Natural killer cell (primary cell): ENCODE measurements at regions of chr9 and their contacts with region 1.

Region 1: DNA sequence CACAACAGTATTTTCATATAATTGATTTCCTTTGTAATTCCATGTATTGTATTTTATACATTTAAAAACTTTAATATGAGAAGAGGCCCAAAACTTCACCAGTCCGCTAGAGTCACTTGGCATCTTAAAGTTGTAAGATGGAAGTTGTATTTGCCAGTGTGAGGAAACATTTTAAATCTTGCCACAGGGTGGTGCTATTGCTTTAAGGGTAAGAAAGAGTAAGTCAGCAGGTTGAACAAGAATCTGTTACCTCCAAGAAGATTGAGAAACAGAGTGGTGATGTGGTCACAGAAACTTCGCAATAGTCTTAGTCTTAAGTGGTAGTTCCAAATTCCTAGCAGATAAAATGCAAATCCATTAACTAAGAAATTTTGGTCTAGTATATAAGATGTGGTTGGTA is 39.8 kb upstream of the RANBP6 start:
- DNase-seq: peak in 1 of 2 donors; percentile 81
- ATAC-seq: peak; percentile 85 to 89 (median 87)
- H3K4me3 ChIP-seq: no peak overlapping the region
- H3K4me3 Mint-ChIP-seq: no peak overlapping the region
- H3K27ac ChIP-seq: no peak overlapping the region
- H3K27ac Mint-ChIP-seq: peak overlapping the region in 1 of 2 donors; percentile 3
- H3K4me1 ChIP-seq: no peaks in the 10 kb centered on the region
- H3K4me1 Mint-ChIP-seq: peaks cover 7% of the 10 kb centered on the region in 2 donors
- H3K27me3 ChIP-seq: no peaks in the 10 kb centered on the region
- H3K27me3 Mint-ChIP-seq: peaks cover 9 to 14% of the 10 kb centered on the region in 2 donors
- CTCF ChIP-seq: peak; percentile 41

Region 2: GRCh38 chr9:5886114-5886939 is 168.9 kb before region 1 on chr9:
- intact Hi-C with region 1: loop called (anchors 1 kb)
- DNase-seq: peak; percentile 79 to 87
- ATAC-seq: peak; percentile 92 to 99 (median 99)
- H3K4me3 ChIP-seq: no peak overlapping the region
- H3K4me3 Mint-ChIP-seq: no peak overlapping the region
- H3K27ac ChIP-seq: no peak overlapping the region
- H3K27ac Mint-ChIP-seq: peak overlapping the region in 1 of 2 donors; percentile 65
- H3K4me1 ChIP-seq: peaks cover 12% of the 10 kb centered on the region
- H3K4me1 Mint-ChIP-seq: peaks cover 10 to 18% of the 10 kb centered on the region in 2 donors
- H3K27me3 ChIP-seq: no peaks in the 10 kb centered on the region
- H3K27me3 Mint-ChIP-seq: peaks cover 0 to 2% of the 10 kb centered on the region in 2 donors
- CTCF ChIP-seq: peak; percentile 90

Region 3: DNA sequence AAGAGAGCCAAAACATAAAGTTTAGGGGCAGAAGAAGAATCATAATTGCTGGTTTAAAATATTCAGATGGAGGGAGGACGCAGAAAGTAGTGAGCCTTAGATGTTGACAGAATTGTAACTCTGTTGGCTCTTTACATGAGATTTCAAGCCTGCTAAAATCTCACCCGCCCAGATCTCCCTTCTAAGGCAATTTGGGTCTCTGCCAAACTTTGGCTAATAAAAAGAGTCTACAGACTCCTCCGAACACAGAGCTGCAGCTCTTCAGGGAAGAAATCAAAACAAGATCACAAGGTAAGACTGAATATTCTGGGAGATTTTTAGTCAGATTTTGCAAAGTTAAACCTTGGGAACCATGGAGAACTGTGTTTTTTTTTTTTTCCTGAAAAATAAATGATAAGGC is 160.3 kb after region 1 on chr9 and contains the start of gene IL33:
- intact Hi-C with region 1: loop called (anchors 10 kb)
- DNase-seq: no peak
- ATAC-seq: no peak
- H3K4me3 ChIP-seq: no peak within 1 kb of the TSS
- H3K4me3 Mint-ChIP-seq: no peak within 1 kb of the TSS
- H3K27ac ChIP-seq: no peak within 1 kb of the TSS
- H3K27ac Mint-ChIP-seq: no peak within 1 kb of the TSS
- H3K4me1 ChIP-seq: no peaks in the 10 kb centered on the region
- H3K4me1 Mint-ChIP-seq: no peaks in the 10 kb centered on the region
- H3K27me3 ChIP-seq: peaks cover 4% of the 10 kb centered on the region
- H3K27me3 Mint-ChIP-seq: peaks cover 21 to 62% of the 10 kb centered on the region in 2 donors
- CTCF ChIP-seq: no peak
- total RNA-seq, gene IL33: not detected

Region 4: DNA sequence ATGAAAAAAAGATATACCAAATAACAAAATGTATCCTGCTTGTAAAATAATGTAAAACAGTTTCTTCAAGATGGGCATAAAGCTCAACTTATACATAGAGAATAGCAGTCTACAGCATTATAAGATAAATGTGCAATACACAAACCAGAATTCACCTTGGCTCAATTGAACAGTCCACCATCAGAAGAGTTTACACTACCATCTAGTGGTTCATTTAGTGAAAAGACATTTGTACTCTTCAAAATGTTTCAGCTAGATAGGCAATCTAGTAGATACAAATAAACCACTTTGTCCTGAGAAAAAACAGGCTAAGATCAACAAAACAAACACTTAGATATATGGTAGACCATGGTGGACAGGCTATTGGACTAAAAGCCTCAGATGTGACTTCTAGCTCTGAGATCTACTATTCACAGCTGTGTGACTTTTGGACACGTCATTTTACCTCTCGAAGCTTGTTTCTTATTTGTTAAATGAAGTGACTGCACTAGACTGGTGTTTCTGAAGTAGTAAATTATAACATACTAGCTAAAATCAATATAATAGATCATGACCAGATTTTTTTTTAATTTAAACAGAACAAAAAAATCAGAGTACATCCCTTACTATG is 250.8 kb after region 1 on chr9:
- intact Hi-C with region 1: loop called (anchors 1 kb)
- DNase-seq: peak in 1 of 2 donors; percentile 43
- ATAC-seq: peak in 1 of 3 donors; percentile 53
- H3K4me3 ChIP-seq: no peak overlapping the region
- H3K4me3 Mint-ChIP-seq: no peak overlapping the region
- H3K27ac ChIP-seq: no peak overlapping the region
- H3K27ac Mint-ChIP-seq: no peak overlapping the region
- H3K4me1 ChIP-seq: no peaks in the 10 kb centered on the region
- H3K4me1 Mint-ChIP-seq: no peaks in the 10 kb centered on the region
- H3K27me3 ChIP-seq: no peaks in the 10 kb centered on the region
- H3K27me3 Mint-ChIP-seq: peaks cover 5 to 35% of the 10 kb centered on the region in 2 donors
- CTCF ChIP-seq: peak; percentile 25

Region 5: DNA sequence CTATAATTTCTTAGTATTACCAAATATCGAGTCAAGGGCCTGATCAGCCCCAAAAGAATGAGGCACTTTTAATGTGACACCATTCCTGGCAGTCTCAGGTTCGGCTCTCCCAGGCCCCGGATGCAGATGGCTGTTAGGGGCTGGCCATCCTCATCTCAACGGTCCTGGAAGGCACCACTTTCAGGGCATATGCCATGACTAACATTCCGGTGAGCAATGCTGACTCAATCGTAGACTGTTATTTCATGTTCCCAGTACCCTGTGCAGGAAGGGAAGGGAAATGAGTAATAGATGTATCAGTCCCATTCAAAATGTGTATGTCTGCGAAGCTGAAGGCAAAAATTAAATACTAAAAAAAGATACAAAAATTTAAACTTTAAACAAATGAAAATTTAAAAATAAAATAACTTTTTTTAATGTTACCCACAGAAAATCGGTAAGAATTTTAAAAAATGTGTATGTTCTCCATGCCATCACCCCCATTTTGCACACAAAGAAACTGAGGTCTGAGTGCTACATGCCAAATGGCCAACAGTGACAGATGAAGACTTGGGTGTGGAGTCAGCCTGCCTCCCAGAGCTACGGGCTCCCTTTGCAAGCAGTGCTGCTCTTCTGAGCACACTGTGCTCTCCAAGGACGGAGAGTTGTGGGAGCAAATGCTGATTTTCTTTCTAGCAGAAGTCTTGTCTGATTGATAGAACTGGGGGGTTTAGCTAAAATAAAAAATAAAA is 511.4 kb after region 1 on chr9:
- intact Hi-C with region 1: loop called (anchors 2 kb)
- DNase-seq: no peak
- ATAC-seq: no peak
- H3K4me3 ChIP-seq: no peak overlapping the region
- H3K4me3 Mint-ChIP-seq: no peak overlapping the region
- H3K27ac ChIP-seq: no peak overlapping the region
- H3K27ac Mint-ChIP-seq: no peak overlapping the region
- H3K4me1 ChIP-seq: no peaks in the 10 kb centered on the region
- H3K4me1 Mint-ChIP-seq: no peaks in the 10 kb centered on the region
- H3K27me3 ChIP-seq: no peaks in the 10 kb centered on the region
- H3K27me3 Mint-ChIP-seq: peaks cover 0 to 7% of the 10 kb centered on the region in 2 donors
- CTCF ChIP-seq: no peak